CD4-positive, alpha-beta memory T cell (primary cell): ENCODE measurements at regions of chr12 and their contacts with region 1.

Region 1: GRCh38 chr12:45215419-45216229 is at the start of gene ANO6:
- DNase-seq: peak; percentile 73 to 81 (median 76)
- H3K4me3 ChIP-seq: peak within 1 kb of the TSS; percentile 68 to 94
- H3K4me3 Mint-ChIP-seq: peak within 1 kb of the TSS; percentile 92 to 99 (median 96)
- H3K27ac ChIP-seq: peak within 1 kb of the TSS; percentile 69
- H3K27ac Mint-ChIP-seq: peak within 1 kb of the TSS; percentile 81 to 98 (median 95)
- H3K4me1 ChIP-seq: peaks cover 48% of the 10 kb centered on the region
- H3K4me1 Mint-ChIP-seq: peaks cover 34 to 77% (median 53%) of the 10 kb centered on the region in 4 donors
- H3K27me3 ChIP-seq: no peaks in the 10 kb centered on the region
- H3K27me3 Mint-ChIP-seq: no peaks in the 10 kb centered on the region
- total RNA-seq, gene ANO6: 29.5 to 32.6 TPM

Region 2: DNA sequence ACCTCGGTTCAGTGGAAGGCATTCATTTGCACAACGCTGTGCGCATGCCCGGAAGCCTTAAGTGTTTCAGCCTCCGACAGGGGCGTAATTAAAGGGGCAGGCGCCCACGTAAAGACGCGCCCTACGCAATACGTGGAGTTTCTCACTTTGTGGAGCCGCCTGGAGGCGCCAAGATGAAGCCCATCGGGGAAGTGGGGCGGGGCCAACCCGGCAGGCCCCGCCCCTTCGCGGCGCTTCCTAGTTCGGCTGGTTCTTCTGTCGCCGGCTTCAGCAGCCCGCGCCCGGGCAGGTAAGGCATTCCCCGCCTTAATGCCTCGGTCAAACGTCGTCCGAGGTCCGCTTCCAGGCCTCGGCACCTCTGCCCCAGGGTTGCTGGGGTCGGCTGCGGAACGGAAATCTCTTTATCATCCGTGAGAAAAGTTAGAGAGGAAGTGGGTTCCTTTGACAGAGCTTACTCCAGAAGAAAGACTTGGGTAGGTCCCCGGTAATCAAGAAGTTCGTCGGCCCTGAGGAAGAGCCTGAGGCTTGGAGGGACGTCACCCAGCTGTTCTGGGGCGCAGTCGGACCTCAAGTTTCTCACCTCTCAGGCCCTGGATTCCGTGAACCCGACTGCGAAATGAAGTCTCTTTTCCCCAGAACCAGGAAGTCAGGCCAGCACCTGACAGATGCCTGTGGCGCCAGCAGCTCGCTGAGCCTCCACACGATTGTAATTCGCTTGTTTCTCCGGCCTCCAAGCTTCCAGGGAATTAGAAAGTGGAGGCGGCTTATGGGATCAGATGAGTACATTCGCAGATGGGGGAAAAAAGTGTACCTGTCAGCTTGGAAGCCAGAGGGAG is 1456.7 kb before region 1 on chr12 and contains the starts of genes IRAK4 and PUS7L:
- CTCF ChIA-PET with region 1: no interaction called
- POLR2A ChIA-PET with region 1: no interaction called
- intact Hi-C with region 1: loop called (anchors 10 kb)
- DNase-seq: peak; percentile 90 to 96 (median 93)
- H3K4me3 ChIP-seq: peak within 1 kb of the TSS; percentile 67 to 91
- H3K4me3 Mint-ChIP-seq: peak within 1 kb of the TSS; percentile 98 to 99 (median 98)
- H3K27ac ChIP-seq: peak within 1 kb of the TSS; percentile 93
- H3K27ac Mint-ChIP-seq: peak within 1 kb of the TSS; percentile 99
- H3K4me1 ChIP-seq: peaks cover 61% of the 10 kb centered on the region
- H3K4me1 Mint-ChIP-seq: peaks cover 45 to 84% (median 69%) of the 10 kb centered on the region in 4 donors
- H3K27me3 ChIP-seq: no peaks in the 10 kb centered on the region
- H3K27me3 Mint-ChIP-seq: no peaks in the 10 kb centered on the region
- total RNA-seq, gene IRAK4: 64.0 to 73.1 TPM
- total RNA-seq, gene PUS7L: 25.5 to 25.6 TPM

Region 3: DNA sequence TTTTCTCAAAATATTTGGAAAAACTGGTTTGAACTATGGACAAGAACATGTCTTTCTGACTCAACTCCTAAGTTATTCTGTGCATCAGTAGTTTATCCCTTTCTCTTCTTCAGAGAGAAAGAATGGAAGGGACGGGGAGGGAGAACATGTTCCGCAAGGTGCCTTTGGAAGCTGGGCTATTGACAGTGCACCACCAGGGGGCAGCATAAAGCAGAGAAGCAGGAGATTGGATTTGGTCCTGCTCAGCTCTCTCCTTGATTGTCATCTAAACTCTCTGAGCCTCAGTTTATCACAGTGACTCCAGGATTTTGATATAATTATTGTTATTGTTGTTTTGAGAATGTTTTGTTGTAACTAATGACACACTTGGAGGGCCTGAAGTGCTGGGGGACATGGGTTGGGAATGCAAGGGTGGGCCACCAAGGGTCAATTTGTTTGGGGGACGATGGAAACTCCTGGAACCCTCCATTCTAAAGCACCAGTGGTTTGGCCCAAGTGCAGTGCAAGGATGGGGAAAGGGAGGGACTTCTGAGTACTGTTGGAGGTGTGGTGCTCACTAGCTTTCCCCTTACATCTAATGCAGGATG is 45.1 kb before region 1 on chr12:
- CTCF ChIA-PET with region 1: interaction called, 6 read pairs
- POLR2A ChIA-PET with region 1: interaction called, 3 read pairs
- intact Hi-C with region 1: loop called (anchors 1 kb)
- DNase-seq: peak; percentile 58 to 66 (median 63)
- H3K4me3 ChIP-seq: no peak overlapping the region
- H3K4me3 Mint-ChIP-seq: no peak overlapping the region
- H3K27ac ChIP-seq: no peak overlapping the region
- H3K27ac Mint-ChIP-seq: peak overlapping the region in 1 of 7 donors; percentile 7
- H3K4me1 ChIP-seq: no peaks in the 10 kb centered on the region
- H3K4me1 Mint-ChIP-seq: no peaks in the 10 kb centered on the region
- H3K27me3 ChIP-seq: no peaks in the 10 kb centered on the region
- H3K27me3 Mint-ChIP-seq: peaks cover 0 to 1% of the 10 kb centered on the region in 2 donors

Region 4: DNA sequence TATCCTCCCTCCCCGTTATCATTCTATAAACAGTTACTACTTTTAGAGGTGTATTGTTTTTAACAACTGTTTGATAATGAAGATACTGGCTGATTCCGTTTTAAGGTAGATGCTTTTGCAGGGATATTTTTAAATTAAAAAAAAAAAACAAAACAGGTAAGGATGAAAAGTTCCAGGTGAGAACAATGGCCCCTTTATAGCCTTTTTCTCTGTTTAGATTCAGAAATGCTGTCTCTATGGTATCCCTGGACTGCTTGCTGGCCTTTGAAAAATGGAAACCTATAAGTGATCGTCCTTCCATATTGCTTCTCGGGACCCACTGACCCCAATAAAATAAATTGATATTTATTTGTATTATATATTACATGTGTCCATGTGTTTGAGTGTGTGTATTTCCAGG is 22.9 kb before region 1 on chr12:
- CTCF ChIA-PET with region 1: interaction called, 25 read pairs
- POLR2A ChIA-PET with region 1: interaction called, 11 read pairs
- intact Hi-C with region 1: loop called (anchors 2 kb)
- DNase-seq: no peak
- H3K4me3 ChIP-seq: no peak overlapping the region
- H3K4me3 Mint-ChIP-seq: no peak overlapping the region
- H3K27ac ChIP-seq: no peak overlapping the region
- H3K27ac Mint-ChIP-seq: peak overlapping the region in 1 of 7 donors; percentile 37
- H3K4me1 ChIP-seq: peaks cover 8% of the 10 kb centered on the region
- H3K4me1 Mint-ChIP-seq: peaks cover 5 to 12% (median 7%) of the 10 kb centered on the region in 4 donors
- H3K27me3 ChIP-seq: no peaks in the 10 kb centered on the region
- H3K27me3 Mint-ChIP-seq: no peaks in the 10 kb centered on the region

Region 5: GRCh38 chr12:45200491-45201043 is 15.1 kb before region 1 on chr12:
- CTCF ChIA-PET with region 1: interaction called, 25 read pairs
- POLR2A ChIA-PET with region 1: interaction called, 18 read pairs
- intact Hi-C with region 1: loop called (anchors 2 kb)
- DNase-seq: peak in 1 of 5 donors; percentile 8
- H3K4me3 ChIP-seq: peak overlapping the region in 1 of 2 donors; percentile 8
- H3K4me3 Mint-ChIP-seq: peak overlapping the region; percentile 61 to 82 (median 68)
- H3K27ac ChIP-seq: no peak overlapping the region
- H3K27ac Mint-ChIP-seq: peak overlapping the region in 6 of 7 donors; percentile 2 to 73 (median 50)
- H3K4me1 ChIP-seq: peaks cover 32% of the 10 kb centered on the region
- H3K4me1 Mint-ChIP-seq: peaks cover 16 to 30% (median 24%) of the 10 kb centered on the region in 4 donors
- H3K27me3 ChIP-seq: no peaks in the 10 kb centered on the region
- H3K27me3 Mint-ChIP-seq: no peaks in the 10 kb centered on the region